ENCODE measurements at regions of chr1 and their contacts with region 1.

Region 1: GRCh38 chr1:61077676-61078541 is 4.5 kb upstream of the NFIA start:
- DNase-seq: peak; percentile 91
- H3K4me3 Mint-ChIP-seq: peak overlapping the region; percentile 87
- H3K27ac Mint-ChIP-seq: peak overlapping the region; percentile 95
- H3K4me1 Mint-ChIP-seq: peaks cover 47% of the 10 kb centered on the region
- H3K27me3 Mint-ChIP-seq: peaks cover 33% of the 10 kb centered on the region

Region 2: GRCh38 chr1:61056573-61057439 is 21.1 kb before region 1 on chr1:
- CTCF ChIA-PET with region 1: interaction called, 73 read pairs
- POLR2A ChIA-PET with region 1: interaction called, 55 read pairs
- DNase-seq: peak; percentile 37
- H3K4me3 Mint-ChIP-seq: peak overlapping the region; percentile 80
- H3K27ac Mint-ChIP-seq: no peak overlapping the region
- H3K4me1 Mint-ChIP-seq: peaks cover 43% of the 10 kb centered on the region
- H3K27me3 Mint-ChIP-seq: peaks cover 62% of the 10 kb centered on the region